ENCODE measurements at regions of chr3 and their contacts with region 1.

Region 1: DNA sequence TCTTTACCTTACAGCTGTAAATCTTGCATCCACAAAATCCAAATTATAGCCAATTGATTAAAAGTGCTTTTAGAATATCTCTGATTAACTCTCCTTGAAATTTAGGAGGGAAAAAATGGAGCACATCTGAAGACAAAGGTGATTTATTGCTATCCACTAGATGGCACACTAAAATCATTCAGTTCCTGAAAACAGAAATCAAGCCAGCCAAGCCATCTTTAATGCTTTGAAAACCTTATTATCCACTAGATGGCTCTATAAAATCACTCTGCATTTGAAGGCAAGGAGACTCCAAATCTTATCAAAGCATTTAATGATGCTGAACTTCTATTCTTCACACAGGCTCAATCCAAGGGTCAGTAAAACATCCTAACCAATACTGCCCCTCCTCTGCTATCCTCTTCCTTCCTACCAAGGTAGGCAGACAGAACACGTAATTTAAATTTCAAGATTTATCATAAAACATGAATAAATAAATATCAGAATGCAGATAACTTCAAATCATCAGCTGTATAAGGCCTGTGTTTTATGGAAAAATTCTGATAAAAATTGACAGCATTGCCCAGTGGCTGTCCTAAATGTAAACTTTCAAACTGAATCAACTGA is 48.4 kb downstream of the GOLIM4 start:
- DNase-seq: peak; percentile 32 to 60 (median 41)
- H3K4me3 ChIP-seq: no peak overlapping the region
- H3K4me3 Mint-ChIP-seq: no peak overlapping the region
- H3K27ac ChIP-seq: no peak overlapping the region
- H3K27ac Mint-ChIP-seq: no peak overlapping the region
- H3K4me1 ChIP-seq: no peaks in the 10 kb centered on the region
- H3K4me1 Mint-ChIP-seq: peaks cover 13% of the 10 kb centered on the region
- H3K27me3 ChIP-seq: no peaks in the 10 kb centered on the region
- H3K27me3 Mint-ChIP-seq: peaks cover 0 to under 1% (median 0%) of the 10 kb centered on the region in 3 donors
- CTCF ChIP-seq: peak; percentile 78

Region 2: DNA sequence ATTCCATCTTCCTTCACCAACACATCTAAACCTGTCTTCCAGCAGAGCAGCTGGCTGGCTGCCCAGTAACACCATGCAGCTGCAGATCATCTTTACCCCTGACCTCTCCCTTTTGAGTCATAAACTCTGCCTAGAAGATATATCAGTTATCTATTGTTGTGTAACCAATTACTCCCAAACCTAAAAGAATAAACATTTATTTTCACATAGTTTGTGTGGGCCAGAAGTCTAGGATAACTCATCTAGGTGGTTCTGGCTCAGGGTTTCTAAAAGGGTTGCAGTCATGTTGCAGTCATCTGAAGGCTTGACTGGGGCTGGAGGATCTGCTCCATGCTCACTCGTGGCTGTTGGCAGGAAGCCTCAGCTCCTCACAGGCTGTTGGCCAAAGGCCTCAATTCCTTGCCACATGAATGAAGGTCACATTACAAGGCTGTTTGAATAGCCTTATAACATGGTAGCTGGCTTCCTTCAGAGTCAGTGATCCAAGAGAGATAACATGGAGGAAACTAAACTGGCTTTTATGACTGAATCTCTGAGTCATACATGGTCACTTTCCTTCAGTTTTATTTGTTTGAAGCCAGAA is 44.4 kb before region 1 on chr3:
- intact Hi-C with region 1: no loop called
- DNase-seq: no peak
- H3K4me3 ChIP-seq: no peak overlapping the region
- H3K4me3 Mint-ChIP-seq: no peak overlapping the region
- H3K27ac ChIP-seq: no peak overlapping the region
- H3K27ac Mint-ChIP-seq: no peak overlapping the region
- H3K4me1 ChIP-seq: no peaks in the 10 kb centered on the region
- H3K4me1 Mint-ChIP-seq: no peaks in the 10 kb centered on the region
- H3K27me3 ChIP-seq: no peaks in the 10 kb centered on the region
- H3K27me3 Mint-ChIP-seq: peaks cover 0 to 2% (median 1%) of the 10 kb centered on the region in 3 donors
- CTCF ChIP-seq: no peak

Region 3: GRCh38 chr3:168165390-168166269 is 118.3 kb after region 1 on chr3:
- intact Hi-C with region 1: loop called (anchors 2 to 5 kb)
- DNase-seq: peak; percentile 33 to 56 (median 48)
- H3K4me3 ChIP-seq: peak overlapping the region in 1 of 3 experiments; percentile 28
- H3K4me3 Mint-ChIP-seq: peak overlapping the region; percentile 53 to 83
- H3K27ac ChIP-seq: no peak overlapping the region
- H3K27ac Mint-ChIP-seq: no peak overlapping the region
- H3K4me1 ChIP-seq: peaks cover 0 to 3% of the 10 kb centered on the region in 2 donors
- H3K4me1 Mint-ChIP-seq: peaks cover 3% of the 10 kb centered on the region
- H3K27me3 ChIP-seq: no peaks in the 10 kb centered on the region
- H3K27me3 Mint-ChIP-seq: peaks cover 0 to 3% (median 2%) of the 10 kb centered on the region in 3 donors
- CTCF ChIP-seq: peak; percentile 74

Measured in CD14-positive monocyte (primary cell).